ENCODE measurements at regions of chr4 and their contacts with region 1.

Region 1: DNA sequence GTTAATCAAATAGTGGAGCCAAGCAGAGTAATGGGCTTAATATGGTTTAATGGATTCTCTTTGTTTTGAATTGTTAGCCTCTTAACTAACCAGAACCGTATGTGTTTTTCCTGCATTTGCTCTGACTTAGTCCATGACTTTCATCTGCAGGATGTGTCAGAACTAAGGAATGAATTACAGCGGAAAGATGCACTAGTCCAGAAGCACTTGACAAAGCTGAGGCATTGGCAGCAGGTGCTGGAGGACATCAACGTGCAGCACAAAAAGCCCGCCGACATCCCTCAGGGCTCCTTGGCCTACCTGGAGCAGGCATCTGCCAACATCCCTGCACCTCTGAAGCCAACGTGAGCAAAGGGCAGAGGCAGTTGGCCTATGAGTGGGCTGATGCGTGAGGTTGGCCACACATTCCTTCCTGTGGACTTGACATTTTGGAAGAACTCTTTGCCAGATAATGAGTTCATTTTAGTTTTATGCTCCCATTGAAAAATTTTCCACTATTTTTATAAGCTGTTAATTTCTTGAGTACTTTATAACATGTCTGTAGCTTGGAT is 9.1 kb downstream of the MED28 start:
- DNase-seq: peak; percentile 10
- H3K4me3 ChIP-seq: no peak overlapping the region
- H3K27ac ChIP-seq: no peak overlapping the region
- H3K27me3 ChIP-seq: no peaks in the 10 kb centered on the region
- CTCF ChIP-seq: no peak

Region 2: DNA sequence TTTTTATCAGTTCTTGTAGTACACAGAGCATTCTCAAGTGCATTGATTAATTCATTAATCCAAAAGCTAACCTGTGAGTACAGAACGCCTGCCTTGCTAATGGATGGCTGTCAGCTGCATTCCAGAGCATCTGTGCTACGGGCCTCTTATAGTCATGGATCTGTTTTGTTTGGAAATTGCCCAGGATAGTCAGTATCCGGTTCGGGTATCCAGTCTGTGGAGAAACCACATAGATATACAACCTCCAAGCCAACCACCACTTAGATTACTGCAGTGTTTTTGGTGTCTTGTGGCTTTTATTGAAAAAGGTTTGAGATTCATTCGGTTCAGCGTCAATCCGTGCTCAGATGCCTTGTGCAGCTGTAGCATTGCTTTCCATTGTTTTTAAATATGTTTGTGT is 42.6 kb before region 1 on chr4:
- CTCF ChIA-PET with region 1: no interaction called
- POLR2A ChIA-PET with region 1: no interaction called
- DNase-seq: peak; percentile 36
- H3K4me3 ChIP-seq: no peak overlapping the region
- H3K27ac ChIP-seq: no peak overlapping the region
- H3K27me3 ChIP-seq: no peaks in the 10 kb centered on the region
- CTCF ChIP-seq: no peak

Region 3: DNA sequence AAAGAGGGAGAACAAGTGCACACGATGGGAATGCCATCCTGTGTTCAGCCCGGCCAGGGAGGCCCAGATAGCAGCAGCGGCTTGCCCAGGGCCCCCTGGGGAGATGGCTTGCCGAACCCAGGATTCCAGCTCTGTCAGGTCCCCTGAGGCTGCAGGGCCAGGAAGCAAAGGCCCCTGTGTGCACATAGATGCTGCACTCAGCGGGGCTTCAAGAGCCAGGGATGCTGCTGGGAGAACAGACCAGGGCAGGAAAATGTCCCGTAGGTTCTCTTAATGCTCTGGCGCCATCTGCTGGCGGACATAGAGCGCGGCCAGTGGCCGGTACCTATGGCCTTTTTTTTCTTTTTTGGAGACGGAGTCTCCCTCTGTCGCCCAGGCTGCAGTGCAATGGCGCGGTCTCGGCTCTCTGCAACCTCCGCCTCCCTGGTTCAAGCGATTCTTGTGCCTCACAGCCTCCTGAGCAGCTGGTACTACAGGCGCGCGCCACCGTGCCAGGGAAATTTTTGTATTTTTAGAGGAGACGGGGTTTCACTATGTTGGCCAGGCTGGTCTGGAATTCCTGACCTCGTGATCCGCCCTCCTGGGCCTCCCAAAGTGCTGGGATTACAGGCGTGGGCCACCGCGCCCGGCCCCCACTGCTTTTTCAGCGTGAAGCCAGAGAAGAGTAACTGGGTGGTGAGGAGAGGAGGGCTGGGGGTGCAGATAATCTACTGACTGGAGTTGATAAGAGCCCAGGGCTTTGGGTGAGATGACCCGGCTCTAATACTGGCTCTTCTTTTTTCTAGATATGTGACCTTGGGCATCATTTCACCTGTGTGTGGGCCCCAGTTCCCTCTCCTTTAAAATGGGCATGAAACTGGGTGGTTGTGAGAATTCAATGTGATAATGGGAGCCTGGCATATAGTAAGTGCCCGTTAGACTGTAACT is 13.4 kb after region 1 on chr4:
- CTCF ChIA-PET with region 1: interaction called, 12 read pairs
- POLR2A ChIA-PET with region 1: no interaction called
- DNase-seq: peak; percentile 37
- H3K4me3 ChIP-seq: no peak overlapping the region
- H3K27ac ChIP-seq: no peak overlapping the region
- H3K27me3 ChIP-seq: no peaks in the 10 kb centered on the region
- CTCF ChIP-seq: peak; percentile 88

Measured in AG04450 (cell line).